K562 (cell line): ENCODE measurements at regions of chr18 and their contacts with region 1.

Region 1: DNA sequence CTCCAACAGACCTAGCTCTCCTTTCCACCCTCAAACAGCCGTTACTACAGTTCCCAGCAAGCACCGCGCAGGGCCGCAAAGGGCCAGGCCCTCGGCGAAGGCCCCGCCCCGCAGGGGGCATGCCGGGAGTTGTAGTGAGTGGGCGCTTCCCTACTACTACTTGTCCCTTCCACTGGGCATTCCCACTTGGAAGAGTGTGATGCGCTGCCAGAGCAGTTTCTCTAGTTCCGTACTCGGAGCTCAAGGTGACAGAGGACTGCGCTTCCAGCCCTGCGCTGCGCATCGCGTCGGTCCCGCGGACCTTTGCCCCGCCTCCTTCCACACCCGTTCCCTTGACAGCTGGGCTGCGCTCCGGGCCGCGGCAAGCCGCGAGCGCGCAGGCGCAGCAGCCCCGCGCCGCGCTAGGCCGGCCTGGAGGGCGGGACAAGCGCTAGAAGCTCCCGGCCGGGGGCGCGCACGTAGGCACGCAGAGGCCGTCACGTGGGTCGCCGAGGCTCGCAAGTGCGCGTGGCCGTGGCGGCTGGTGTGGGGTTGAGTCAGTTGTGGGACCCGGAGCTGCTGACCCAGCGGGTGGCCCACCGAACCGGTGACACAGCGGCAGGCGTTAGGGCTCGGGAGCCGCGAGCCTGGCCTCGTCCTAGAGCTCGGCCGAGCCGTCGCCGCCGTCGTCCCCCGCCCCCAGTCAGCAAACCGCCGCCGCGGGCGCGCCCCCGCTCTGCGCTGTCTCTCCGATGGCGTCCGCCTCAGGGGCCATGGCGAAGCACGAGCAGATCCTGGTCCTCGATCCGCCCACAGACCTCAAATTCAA is at the start of gene VAPA:
- DNase-seq: peak; percentile 96 to 99 (median 98)
- ATAC-seq: peak; percentile 81
- H3K4me3 ChIP-seq: peak within 1 kb of the TSS; percentile 85
- H3K27ac ChIP-seq: peak within 1 kb of the TSS; percentile 97
- H3K4me1 ChIP-seq: peaks cover 7 to 9% of the 10 kb centered on the region in 2 experiments
- H3K27me3 ChIP-seq: no peaks in the 10 kb centered on the region
- CTCF ChIP-seq: peak in 1 of 3 experiments; percentile 9; a peak in 1 of 6 replicates
- EP300 ChIP-seq: peak; percentile 49
- POLR2A ChIP-seq: peak; percentile 96
- RAD21 ChIP-seq: peak; percentile 4 to 20; a peak in 2 of 4 replicates
- polyA plus RNA-seq, gene VAPA: 219 to 224 TPM

Region 2: DNA sequence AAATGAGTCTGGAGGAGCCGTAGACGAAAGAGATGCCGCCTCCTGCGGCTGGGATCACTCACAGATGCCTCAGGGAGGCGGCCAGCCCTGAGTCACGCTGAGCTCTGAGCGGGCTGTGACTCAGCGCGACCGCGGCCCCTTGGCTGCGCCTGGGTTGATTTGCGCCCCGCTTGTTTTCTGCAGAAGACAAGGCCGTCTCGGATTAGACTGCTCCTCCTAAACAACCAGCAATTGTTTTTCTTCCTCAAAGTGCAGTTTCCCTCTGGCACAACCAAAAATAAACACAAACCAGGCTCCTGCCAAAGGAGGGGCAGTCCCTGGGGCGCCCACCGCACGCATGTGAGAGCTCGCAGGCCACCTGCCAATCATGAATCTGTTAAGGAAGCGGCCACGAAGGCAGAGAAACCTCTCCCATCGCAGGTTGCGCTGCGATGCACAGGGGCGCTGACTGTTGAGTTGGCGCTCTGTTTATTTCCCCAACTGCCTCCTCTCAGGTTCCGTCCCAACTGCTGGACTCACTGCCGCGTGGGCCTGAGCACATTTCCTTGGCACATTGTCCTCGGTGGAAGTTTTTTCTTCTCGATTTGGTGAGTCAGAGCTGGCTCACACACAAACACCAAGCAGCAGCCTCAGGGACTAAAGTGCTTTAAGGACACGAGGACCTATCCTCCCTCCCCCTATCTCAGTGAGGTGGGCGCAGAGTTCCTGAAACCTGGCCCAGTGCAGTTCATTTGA is 896.4 kb before region 1 on chr18:
- CTCF ChIA-PET with region 1: no interaction called
- POLR2A ChIA-PET with region 1: no interaction called
- in situ Hi-C with region 1: loop called (anchors 10 kb)
- intact Hi-C with region 1: no loop called
- DNase-seq: peak; percentile 90 to 98 (median 90)
- ATAC-seq: peak; percentile 97
- H3K4me3 ChIP-seq: peak overlapping the region; percentile 1; the same call in 1 of the 2 replicates
- H3K27ac ChIP-seq: peak overlapping the region; percentile 92
- H3K4me1 ChIP-seq: peaks cover 23 to 39% of the 10 kb centered on the region in 2 experiments
- H3K27me3 ChIP-seq: no peaks in the 10 kb centered on the region
- CTCF ChIP-seq: peak; percentile 8 to 33 (median 12); a peak in 3 of 6 replicates
- EP300 ChIP-seq: peak; percentile 75
- POLR2A ChIP-seq: peak; percentile 83
- RAD21 ChIP-seq: peak in 1 of 2 experiments; percentile 36; a peak in 3 of 4 replicates

Region 3: GRCh38 chr18:9808295-9809241 is 105.2 kb before region 1 on chr18:
- CTCF ChIA-PET with region 1: no interaction called
- POLR2A ChIA-PET with region 1: interaction called, 12 read pairs
- in situ Hi-C with region 1: no loop called
- intact Hi-C with region 1: loop called (anchors 5 kb)
- DNase-seq: peak in 1 of 4 experiments; percentile 58
- ATAC-seq: peak; percentile 24
- H3K4me3 ChIP-seq: no peak overlapping the region
- H3K27ac ChIP-seq: peak overlapping the region; percentile 6; the same call in 2 of the 3 replicates
- H3K4me1 ChIP-seq: peaks cover 33 to 45% of the 10 kb centered on the region in 2 experiments
- H3K27me3 ChIP-seq: no peaks in the 10 kb centered on the region
- CTCF ChIP-seq: no peak
- EP300 ChIP-seq: no peak
- POLR2A ChIP-seq: no peak
- RAD21 ChIP-seq: no peak

Region 4: DNA sequence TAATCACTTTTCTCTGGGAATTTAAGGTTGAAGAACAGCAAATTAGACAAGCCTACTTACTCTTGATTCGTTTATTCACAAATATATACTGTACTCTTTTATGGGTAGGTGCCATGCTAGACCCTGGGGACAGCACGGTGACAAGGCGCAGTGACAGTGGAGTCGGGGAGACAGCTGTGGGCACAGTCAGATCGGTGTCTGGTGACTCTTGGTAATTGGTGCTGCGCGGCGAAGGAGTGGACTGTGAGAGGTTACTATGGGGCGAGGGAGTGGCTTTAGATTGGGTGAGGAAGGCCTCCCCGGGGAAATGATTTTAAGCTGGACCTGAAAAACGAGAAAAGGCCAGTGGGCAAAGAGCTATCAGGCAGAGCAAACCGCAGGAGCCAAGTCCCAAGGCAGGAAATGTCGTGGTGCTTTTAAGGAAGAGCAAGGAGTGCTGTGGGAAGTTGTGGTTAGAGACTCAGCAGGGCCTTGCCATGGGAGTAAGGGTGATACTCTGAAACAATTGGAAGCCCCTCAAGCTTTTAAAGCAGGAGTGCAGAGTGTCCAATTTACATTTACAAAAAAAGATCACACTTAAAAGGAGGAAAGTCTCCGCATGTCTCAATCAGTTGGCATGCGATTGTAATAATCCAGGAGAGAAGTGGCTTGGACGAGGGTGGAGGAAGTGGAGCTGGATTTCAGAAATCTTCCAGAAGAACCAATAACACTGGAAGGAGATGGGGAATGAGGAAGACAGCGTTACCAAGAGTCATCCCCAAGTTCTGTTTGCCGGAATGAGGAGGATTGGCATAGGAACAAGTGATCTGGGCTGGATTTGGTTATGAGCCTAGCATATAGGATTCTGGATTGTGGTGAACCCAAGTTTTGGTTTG is 64.1 kb before region 1 on chr18:
- CTCF ChIA-PET with region 1: no interaction called
- POLR2A ChIA-PET with region 1: interaction called, 19 read pairs
- in situ Hi-C with region 1: no loop called
- intact Hi-C with region 1: loop called (anchors 1 kb)
- DNase-seq: peak; percentile 51 to 90 (median 69)
- ATAC-seq: peak; percentile 96
- H3K4me3 ChIP-seq: no peak overlapping the region
- H3K27ac ChIP-seq: peak overlapping the region; percentile 68
- H3K4me1 ChIP-seq: peaks cover 11 to 46% of the 10 kb centered on the region in 2 experiments
- H3K27me3 ChIP-seq: no peaks in the 10 kb centered on the region
- CTCF ChIP-seq: no peak
- EP300 ChIP-seq: no peak
- POLR2A ChIP-seq: 0 out of 2 replicates have a peak, but pooled peaks have one; percentile 41
- RAD21 ChIP-seq: peak in 1 of 2 experiments; percentile 31; a peak in 3 of 4 replicates

Region 5: GRCh38 chr18:9876867-9877654 is 36.7 kb before region 1 on chr18:
- CTCF ChIA-PET with region 1: no interaction called
- POLR2A ChIA-PET with region 1: interaction called, 12 read pairs
- in situ Hi-C with region 1: no loop called
- intact Hi-C with region 1: loop called (anchors 1 kb)
- DNase-seq: peak; percentile 80 to 98 (median 88)
- ATAC-seq: peak; percentile 85
- H3K4me3 ChIP-seq: peak overlapping the region; percentile 7; the same call in 1 of the 2 replicates
- H3K27ac ChIP-seq: peak overlapping the region; percentile 97
- H3K4me1 ChIP-seq: peaks cover 23 to 57% of the 10 kb centered on the region in 2 experiments
- H3K27me3 ChIP-seq: no peaks in the 10 kb centered on the region
- CTCF ChIP-seq: peak in 1 of 3 experiments; percentile 15; a peak in 2 of 6 replicates
- EP300 ChIP-seq: peak; percentile 96
- POLR2A ChIP-seq: peak; percentile 71; the same call in 1 of the 2 replicates
- RAD21 ChIP-seq: peak; percentile 34 to 38

Region 6: DNA sequence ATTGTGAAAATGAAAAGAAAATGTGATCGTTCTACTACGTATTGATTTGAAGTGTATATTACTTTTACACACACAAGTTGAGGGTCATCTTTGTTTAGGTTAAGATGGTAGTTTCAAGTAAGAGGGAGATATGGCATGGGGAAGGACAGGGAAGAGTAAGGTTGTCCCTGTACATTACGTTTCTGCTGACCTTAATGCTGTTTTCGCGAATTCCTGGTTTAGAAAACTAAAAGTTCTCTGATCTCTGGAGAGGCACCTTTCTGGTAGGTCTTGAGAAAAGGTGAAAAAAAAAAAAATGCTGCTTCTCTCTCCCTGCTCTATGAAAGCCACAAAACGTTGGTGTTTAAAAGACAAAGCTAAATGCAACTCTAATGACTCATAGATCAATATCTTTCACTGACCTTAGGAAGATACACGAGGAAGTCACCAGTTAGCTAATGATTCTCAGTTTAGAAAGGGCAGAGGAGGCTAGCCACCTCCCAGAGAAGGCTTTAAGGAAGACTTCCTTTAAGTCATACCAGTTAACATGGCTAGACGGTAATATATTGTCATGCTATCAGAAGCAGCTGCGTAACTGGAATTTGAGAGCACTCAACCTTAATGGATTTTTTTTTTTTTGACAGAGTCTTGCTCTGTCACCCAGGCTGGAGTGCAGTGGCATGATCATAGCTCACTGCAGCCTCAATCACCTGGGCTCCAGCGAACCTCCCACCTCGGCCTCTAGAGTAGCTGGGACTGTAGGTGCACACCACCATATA is 14.8 kb before region 1 on chr18:
- CTCF ChIA-PET with region 1: no interaction called
- POLR2A ChIA-PET with region 1: interaction called, 27 read pairs
- in situ Hi-C with region 1: no loop called
- intact Hi-C with region 1: no loop called
- DNase-seq: peak; percentile 52 to 91 (median 66)
- ATAC-seq: peak; percentile 80
- H3K4me3 ChIP-seq: peak overlapping the region; percentile 18
- H3K27ac ChIP-seq: peak overlapping the region; percentile 96
- H3K4me1 ChIP-seq: peaks cover 26 to 62% of the 10 kb centered on the region in 2 experiments
- H3K27me3 ChIP-seq: no peaks in the 10 kb centered on the region
- CTCF ChIP-seq: no peak; a peak in 1 of 6 replicates
- EP300 ChIP-seq: peak; percentile 87
- POLR2A ChIP-seq: peak; percentile 69; the same call in 1 of the 2 replicates
- RAD21 ChIP-seq: peak; percentile 11 to 32; a peak in 2 of 4 replicates

Region 7: GRCh38 chr18:9933865-9934264 is 20.1 kb after region 1 on chr18:
- CTCF ChIA-PET with region 1: no interaction called
- POLR2A ChIA-PET with region 1: interaction called, 15 read pairs
- in situ Hi-C with region 1: no loop called
- intact Hi-C with region 1: loop called (anchors 1 kb)
- DNase-seq: no peak
- ATAC-seq: no peak
- H3K4me3 ChIP-seq: no peak overlapping the region
- H3K27ac ChIP-seq: 0 out of 3 replicates have a peak overlapping the region, but pooled peaks have one; percentile 8
- H3K4me1 ChIP-seq: peaks cover 0 to 25% of the 10 kb centered on the region in 2 experiments; a peak in 3 of 5 replicates
- H3K27me3 ChIP-seq: no peaks in the 10 kb centered on the region
- CTCF ChIP-seq: no peak
- EP300 ChIP-seq: no peak
- POLR2A ChIP-seq: 0 out of 2 replicates have a peak, but pooled peaks have one; percentile 8
- RAD21 ChIP-seq: 0 out of 4 replicates have a peak, but pooled peaks of 1 of the 2 experiments have one; percentile 4